ENCODE measurements at regions of chr6 and their contacts with region 1.

Region 1: DNA sequence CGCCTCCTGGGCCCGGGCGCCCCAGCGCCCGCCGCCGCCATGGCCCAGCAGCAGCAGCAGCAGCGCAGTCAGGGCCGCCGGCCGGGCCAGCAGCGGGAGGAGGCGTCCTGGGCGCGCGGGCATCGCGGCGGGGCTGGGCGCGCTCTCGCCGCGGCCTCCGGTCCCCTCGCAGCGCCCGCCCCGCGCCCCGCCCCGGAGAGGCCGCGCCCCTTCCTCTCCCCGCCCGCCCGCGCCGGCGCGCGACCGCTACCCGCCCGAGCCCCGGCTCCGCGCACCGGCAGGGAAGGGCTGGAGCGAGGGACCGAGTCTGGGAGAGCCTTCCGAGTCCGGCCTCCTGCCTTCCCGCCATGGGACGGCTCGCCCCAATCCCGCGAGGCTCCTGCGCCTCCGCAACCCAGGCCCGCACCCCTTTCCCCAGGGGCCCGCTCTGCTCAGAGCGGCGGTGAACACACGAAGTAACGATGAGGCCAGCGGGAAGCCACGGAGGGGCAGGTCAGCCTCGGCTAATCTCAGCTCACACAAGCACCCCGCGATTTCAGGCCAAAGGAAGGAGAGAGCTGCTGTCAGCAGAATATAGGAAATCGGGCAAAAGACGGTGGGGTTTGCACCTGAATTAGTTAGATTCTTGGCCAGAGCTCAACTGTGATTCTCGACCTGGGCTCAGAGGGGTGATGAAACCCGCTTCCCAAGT is at the start of gene TXNDC5:
- DNase-seq: peak; percentile 81
- ATAC-seq: peak; percentile 85
- H3K4me3 ChIP-seq: peak within 1 kb of the TSS; percentile 30 to 82 (median 61)
- H3K4me3 Mint-ChIP-seq: peak within 1 kb of the TSS; percentile 82
- H3K27ac ChIP-seq: peak within 1 kb of the TSS; percentile 74 to 90
- H3K27ac Mint-ChIP-seq: peak within 1 kb of the TSS; percentile 77
- H3K4me1 ChIP-seq: peaks cover 27 to 71% of the 10 kb centered on the region in 2 donors
- H3K4me1 Mint-ChIP-seq: peaks cover 22% of the 10 kb centered on the region
- H3K27me3 ChIP-seq: no peaks in the 10 kb centered on the region
- H3K27me3 Mint-ChIP-seq: no peaks in the 10 kb centered on the region
- CTCF ChIP-seq: no peak
- total RNA-seq, gene TXNDC5: 57.5 and 62.6 TPM in 2 replicates

Region 2: DNA sequence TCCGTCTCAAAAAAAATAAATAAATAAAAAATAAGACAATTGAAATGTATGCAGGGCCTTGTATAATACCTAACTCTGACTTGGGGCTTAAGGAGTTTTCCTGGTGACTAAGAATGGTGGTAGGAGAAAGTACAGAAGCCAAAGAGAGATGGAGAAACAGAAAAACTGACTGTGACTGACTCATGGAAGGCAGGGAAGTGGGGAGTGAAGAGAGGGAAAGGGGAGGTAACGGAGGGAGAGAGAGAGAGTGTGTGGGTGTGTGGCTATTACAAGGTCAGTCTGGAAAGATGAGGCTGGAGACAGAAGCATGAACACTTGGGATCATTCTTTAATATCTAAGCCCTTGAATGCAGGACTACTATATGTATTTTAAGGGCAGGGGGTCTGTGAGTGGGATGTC is 282.3 kb before region 1 on chr6:
- CTCF ChIA-PET with region 1: no interaction called
- POLR2A ChIA-PET with region 1: no interaction called
- intact Hi-C with region 1: no loop called
- DNase-seq: no peak
- ATAC-seq: no peak
- H3K4me3 ChIP-seq: no peak overlapping the region
- H3K4me3 Mint-ChIP-seq: no peak overlapping the region
- H3K27ac ChIP-seq: no peak overlapping the region
- H3K27ac Mint-ChIP-seq: no peak overlapping the region
- H3K4me1 ChIP-seq: peaks cover 0 to 3% of the 10 kb centered on the region in 2 donors
- H3K4me1 Mint-ChIP-seq: no peaks in the 10 kb centered on the region
- H3K27me3 ChIP-seq: no peaks in the 10 kb centered on the region
- H3K27me3 Mint-ChIP-seq: peaks cover 15% of the 10 kb centered on the region
- CTCF ChIP-seq: no peak

Region 3: DNA sequence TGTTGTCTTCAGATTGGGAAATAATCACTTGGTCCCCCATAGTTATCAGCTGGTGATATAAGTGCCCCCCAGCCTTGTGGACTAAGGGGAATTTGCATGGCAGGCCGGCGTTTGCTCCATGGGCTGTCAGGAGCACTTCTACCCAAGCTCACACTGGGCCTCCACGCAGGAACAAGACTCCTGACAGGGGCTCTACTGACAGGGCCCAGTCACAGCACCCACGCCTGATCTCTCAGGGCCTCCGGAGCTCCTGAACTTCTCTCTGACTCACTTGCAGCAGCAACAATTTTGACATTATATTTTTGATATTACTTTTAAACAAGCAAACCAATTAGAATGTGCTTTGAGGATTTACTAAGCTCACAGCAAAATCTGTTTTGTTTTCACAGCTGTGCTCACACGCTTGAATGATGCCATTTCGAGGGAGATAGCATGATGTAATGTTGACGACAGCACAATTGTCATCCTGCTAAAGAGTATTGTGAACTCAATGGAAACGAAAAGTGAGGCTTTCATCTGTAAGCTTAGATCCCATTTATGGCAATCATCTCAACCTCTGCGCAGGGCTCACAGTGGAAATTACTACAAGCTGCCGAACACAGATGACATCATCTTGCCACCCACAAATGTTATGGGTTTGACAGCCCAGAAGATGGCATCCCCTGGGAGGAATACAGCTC is 28.5 kb after region 1 on chr6:
- CTCF ChIA-PET with region 1: no interaction called
- POLR2A ChIA-PET with region 1: no interaction called
- intact Hi-C with region 1: loop called (anchors 2 kb)
- DNase-seq: peak; percentile 58
- ATAC-seq: peak; percentile 70
- H3K4me3 ChIP-seq: no peak overlapping the region
- H3K4me3 Mint-ChIP-seq: peak overlapping the region; percentile 53
- H3K27ac ChIP-seq: peak overlapping the region in 1 of 2 donors; percentile 66
- H3K27ac Mint-ChIP-seq: peak overlapping the region; percentile 80
- H3K4me1 ChIP-seq: peaks cover 27 to 36% of the 10 kb centered on the region in 2 donors
- H3K4me1 Mint-ChIP-seq: peaks cover 34% of the 10 kb centered on the region
- H3K27me3 ChIP-seq: no peaks in the 10 kb centered on the region
- H3K27me3 Mint-ChIP-seq: no peaks in the 10 kb centered on the region
- CTCF ChIP-seq: no peak

Region 4: DNA sequence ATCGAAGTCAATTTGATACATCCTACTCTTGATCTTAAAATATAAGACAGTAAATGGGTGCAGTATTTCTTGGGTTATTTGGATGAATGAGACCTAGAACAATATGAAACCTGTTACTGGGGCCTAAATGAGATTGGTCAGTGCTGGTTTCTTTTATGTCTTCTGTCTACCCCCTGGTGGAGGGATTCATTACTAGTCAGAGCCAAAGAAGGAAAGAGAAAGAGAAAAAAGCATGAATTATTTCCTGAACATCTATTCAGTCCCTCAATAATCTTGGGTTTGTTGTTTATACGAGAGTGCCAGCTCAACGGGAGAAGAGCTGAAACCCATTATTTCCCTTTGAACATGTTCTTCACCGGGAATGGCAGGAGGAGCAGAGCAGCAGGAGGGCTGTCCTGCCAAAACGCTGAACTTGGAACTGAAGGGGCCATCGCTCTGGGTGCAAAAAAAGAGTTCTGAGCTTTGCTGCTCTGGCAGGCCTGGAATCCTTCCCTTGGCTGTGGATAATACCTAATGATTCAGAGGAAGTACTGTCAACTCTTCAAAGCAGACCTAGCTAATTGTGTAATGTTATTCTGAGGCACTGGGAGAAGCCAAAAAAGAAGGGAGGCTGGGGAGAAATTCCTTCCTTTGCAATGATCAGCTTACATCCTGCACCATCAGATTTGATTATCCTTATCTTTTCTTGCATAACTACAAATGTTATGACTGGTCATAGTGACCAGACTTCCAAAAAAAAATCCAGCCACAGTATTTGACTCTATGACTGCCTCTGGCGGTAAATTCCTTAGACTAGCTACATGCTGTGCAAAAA is 81.4 kb after region 1 on chr6:
- CTCF ChIA-PET with region 1: interaction called, 3 read pairs
- POLR2A ChIA-PET with region 1: no interaction called
- intact Hi-C with region 1: loop called (anchors 5 kb)
- DNase-seq: peak; percentile 60
- ATAC-seq: peak; percentile 41
- H3K4me3 ChIP-seq: no peak overlapping the region
- H3K4me3 Mint-ChIP-seq: no peak overlapping the region
- H3K27ac ChIP-seq: no peak overlapping the region
- H3K27ac Mint-ChIP-seq: no peak overlapping the region
- H3K4me1 ChIP-seq: peaks cover 5 to 6% of the 10 kb centered on the region in 2 donors
- H3K4me1 Mint-ChIP-seq: peaks cover 5% of the 10 kb centered on the region
- H3K27me3 ChIP-seq: no peaks in the 10 kb centered on the region
- H3K27me3 Mint-ChIP-seq: no peaks in the 10 kb centered on the region
- CTCF ChIP-seq: peak; percentile 51

Region 5: DNA sequence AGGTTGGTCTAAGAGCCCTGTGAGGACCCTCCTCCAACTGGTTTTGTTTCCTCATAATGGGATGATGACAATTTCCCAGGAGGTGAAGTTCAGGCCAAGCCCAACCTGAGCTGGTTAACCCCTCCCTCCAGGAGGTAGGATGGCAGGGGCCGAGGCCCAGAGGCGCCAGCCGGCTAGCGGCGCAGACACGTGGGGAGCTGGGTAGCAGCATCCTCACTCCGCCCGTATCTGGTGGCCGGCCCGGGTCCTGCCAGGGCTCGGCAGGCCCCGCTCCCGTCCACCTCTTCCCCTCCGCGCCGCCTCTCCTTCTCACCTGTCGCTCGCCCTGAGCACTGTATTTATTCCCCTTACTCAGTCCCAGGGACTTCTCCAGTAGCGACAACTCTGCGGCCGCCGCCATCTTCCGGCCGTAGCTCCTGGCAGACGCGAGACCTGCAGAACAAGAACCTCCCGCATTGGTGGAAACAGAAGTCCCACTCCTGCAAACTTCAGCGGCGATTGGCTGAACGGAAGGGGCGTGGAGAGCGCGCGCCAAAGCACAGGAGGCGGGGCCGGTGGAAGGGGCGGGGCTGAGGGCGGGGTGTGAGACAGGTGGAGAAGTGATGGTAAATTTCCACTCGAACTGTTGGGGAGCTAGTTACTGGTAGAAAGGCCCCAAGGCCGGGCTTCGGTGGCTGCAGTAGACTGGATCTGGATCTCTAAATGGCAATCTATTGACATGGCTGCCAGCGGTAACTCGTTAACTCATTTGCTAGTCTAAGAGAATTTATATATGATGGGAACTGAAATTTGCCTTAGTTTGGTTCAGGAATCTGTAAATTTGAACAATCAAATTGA is 191.5 kb after region 1 on chr6 and contains the start of gene EEF1E1:
- CTCF ChIA-PET with region 1: no interaction called
- POLR2A ChIA-PET with region 1: no interaction called
- intact Hi-C with region 1: loop called (anchors 2 kb)
- DNase-seq: peak; percentile 95
- ATAC-seq: peak; percentile 98
- H3K4me3 ChIP-seq: peak within 1 kb of the TSS; percentile 61 to 89 (median 86)
- H3K4me3 Mint-ChIP-seq: peak within 1 kb of the TSS; percentile 96
- H3K27ac ChIP-seq: peak within 1 kb of the TSS; percentile 50 to 76
- H3K27ac Mint-ChIP-seq: peak within 1 kb of the TSS; percentile 97
- H3K4me1 ChIP-seq: peaks cover 12% of the 10 kb centered on the region in 2 donors
- H3K4me1 Mint-ChIP-seq: peaks cover 21% of the 10 kb centered on the region
- H3K27me3 ChIP-seq: peaks cover 0 to 6% (median 2%) of the 10 kb centered on the region in 4 experiments
- H3K27me3 Mint-ChIP-seq: peaks cover 22% of the 10 kb centered on the region
- CTCF ChIP-seq: no peak
- total RNA-seq, gene EEF1E1: 20.1 and 23.1 TPM in 2 replicates